ENCODE measurements at regions of chr11 and their contacts with region 1.

Region 1: DNA sequence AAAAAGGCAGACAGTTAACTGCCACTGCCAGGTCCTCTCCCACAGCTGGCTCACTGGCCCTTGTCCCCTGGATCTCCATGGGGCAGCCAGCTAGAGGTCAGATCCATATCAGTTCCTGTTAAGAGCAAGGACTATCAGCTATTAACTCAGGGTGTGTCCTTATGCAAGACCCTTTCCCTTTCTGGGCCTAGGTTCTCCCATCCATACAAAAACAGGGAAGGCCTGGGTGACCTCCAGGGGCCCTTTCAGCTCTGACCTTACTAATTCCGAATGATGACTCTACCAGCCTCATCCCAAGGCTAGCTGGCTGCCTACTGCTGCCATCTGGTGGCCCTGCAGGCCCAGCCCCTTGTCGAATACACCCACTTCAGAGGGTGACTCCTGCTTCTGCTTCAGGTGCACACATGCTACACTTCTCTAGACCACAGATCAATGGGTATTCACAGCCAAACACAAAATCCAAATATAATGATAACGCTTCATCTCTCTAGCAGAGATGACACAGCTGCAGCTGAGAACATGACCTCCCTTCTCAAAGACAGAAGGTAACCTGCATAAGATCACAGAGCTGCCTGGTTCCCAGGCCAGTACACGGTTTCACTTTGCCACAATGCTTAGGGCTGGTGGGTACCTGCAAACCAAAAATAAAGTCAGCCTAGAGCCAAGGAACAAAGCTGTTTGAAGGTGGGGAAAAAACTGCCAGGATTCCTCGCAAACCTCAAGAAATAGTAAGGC is 34.1 kb downstream of the SERGEF start:
- DNase-seq: peak; percentile 57
- H3K4me3 Mint-ChIP-seq: no peak overlapping the region
- H3K27ac Mint-ChIP-seq: no peak overlapping the region
- H3K4me1 Mint-ChIP-seq: no peaks in the 10 kb centered on the region
- H3K27me3 Mint-ChIP-seq: no peaks in the 10 kb centered on the region
- CTCF ChIP-seq: peak; percentile 75

Region 2: DNA sequence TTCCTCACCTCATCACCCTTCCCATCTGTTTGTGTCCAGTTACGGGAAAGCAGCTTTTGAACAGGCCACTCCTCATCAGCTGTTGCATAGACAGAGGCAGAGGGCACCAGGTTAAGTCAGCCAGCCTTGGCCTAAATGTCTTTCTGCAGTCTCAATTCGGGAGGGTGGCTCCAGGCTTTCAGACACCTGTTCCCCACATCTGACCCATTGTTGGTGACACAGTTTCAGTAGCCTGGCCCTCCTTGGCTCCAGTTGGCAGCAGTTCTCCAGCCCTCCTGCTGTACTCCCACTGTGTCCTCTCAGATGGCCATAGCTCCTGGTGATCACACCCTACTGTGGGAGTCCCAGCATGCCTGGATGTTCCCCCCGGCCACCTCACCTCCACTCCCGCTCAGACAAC is 330.2 kb before region 1 on chr11:
- CTCF ChIA-PET with region 1: interaction called, 11 read pairs
- POLR2A ChIA-PET with region 1: no interaction called
- intact Hi-C with region 1: no loop called
- DNase-seq: no peak
- H3K4me3 Mint-ChIP-seq: no peak overlapping the region
- H3K27ac Mint-ChIP-seq: no peak overlapping the region
- H3K4me1 Mint-ChIP-seq: no peaks in the 10 kb centered on the region
- H3K27me3 Mint-ChIP-seq: peaks cover 46% of the 10 kb centered on the region
- CTCF ChIP-seq: no peak

Region 3: DNA sequence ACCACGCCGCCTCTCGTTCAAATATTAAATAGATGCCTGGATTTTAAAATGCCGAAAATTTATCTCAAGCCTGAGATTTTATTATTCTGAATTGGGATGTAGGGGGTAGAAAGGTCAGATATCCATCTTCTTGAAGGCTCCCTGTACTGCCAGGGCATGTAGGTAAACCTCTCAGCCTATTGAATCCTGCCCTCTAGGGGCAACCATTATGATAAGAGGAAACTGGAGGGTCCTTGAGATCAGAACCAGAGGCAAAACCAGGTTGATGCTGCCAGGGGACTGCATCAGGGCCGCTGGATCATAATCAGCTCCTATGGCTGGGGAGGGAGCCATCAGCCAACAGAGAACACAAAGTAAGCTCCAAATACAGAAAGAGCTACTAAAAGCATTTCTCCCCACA is 151.7 kb before region 1 on chr11:
- CTCF ChIA-PET with region 1: interaction called, 14 read pairs
- POLR2A ChIA-PET with region 1: interaction called, 3 read pairs
- intact Hi-C with region 1: loop called (anchors 2 kb)
- DNase-seq: peak; percentile 35
- H3K4me3 Mint-ChIP-seq: no peak overlapping the region
- H3K27ac Mint-ChIP-seq: no peak overlapping the region
- H3K4me1 Mint-ChIP-seq: no peaks in the 10 kb centered on the region
- H3K27me3 Mint-ChIP-seq: no peaks in the 10 kb centered on the region
- CTCF ChIP-seq: peak; percentile 26

Region 4: GRCh38 chr11:17864478-17864941 is 114.2 kb before region 1 on chr11:
- CTCF ChIA-PET with region 1: interaction called, 10 read pairs
- POLR2A ChIA-PET with region 1: interaction called, 4 read pairs
- intact Hi-C with region 1: no loop called
- DNase-seq: peak; percentile 49
- H3K4me3 Mint-ChIP-seq: no peak overlapping the region
- H3K27ac Mint-ChIP-seq: no peak overlapping the region
- H3K4me1 Mint-ChIP-seq: no peaks in the 10 kb centered on the region
- H3K27me3 Mint-ChIP-seq: no peaks in the 10 kb centered on the region
- CTCF ChIP-seq: peak; percentile 62

Region 5: DNA sequence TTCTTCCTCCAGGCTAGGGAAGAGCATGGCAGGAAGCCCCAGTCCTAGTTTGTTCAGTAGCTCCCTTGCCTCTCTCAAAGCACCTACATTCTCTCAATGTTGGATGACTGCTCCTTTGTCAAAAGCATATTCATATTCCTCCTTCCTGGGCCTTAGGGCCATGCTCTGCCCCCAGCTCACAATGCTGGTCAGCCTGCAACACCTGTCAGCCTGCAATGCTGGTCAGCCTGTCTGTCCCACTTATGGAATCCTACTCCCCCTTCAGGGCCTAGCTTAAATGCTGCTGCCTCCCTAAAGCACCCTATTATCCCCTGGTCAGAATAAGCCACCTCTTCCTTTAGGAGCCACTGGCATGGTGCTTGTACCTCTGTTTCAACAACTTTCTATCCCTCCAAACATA is 11.1 kb before region 1 on chr11:
- CTCF ChIA-PET with region 1: interaction called, 31 read pairs
- POLR2A ChIA-PET with region 1: no interaction called
- intact Hi-C with region 1: no loop called
- DNase-seq: no peak
- H3K4me3 Mint-ChIP-seq: no peak overlapping the region
- H3K27ac Mint-ChIP-seq: no peak overlapping the region
- H3K4me1 Mint-ChIP-seq: peaks cover 1% of the 10 kb centered on the region
- H3K27me3 Mint-ChIP-seq: no peaks in the 10 kb centered on the region
- CTCF ChIP-seq: no peak

Measured in MCF 10A (cell line).